ENCODE measurements at regions of chr1 and their contacts with region 1.

Region 1: DNA sequence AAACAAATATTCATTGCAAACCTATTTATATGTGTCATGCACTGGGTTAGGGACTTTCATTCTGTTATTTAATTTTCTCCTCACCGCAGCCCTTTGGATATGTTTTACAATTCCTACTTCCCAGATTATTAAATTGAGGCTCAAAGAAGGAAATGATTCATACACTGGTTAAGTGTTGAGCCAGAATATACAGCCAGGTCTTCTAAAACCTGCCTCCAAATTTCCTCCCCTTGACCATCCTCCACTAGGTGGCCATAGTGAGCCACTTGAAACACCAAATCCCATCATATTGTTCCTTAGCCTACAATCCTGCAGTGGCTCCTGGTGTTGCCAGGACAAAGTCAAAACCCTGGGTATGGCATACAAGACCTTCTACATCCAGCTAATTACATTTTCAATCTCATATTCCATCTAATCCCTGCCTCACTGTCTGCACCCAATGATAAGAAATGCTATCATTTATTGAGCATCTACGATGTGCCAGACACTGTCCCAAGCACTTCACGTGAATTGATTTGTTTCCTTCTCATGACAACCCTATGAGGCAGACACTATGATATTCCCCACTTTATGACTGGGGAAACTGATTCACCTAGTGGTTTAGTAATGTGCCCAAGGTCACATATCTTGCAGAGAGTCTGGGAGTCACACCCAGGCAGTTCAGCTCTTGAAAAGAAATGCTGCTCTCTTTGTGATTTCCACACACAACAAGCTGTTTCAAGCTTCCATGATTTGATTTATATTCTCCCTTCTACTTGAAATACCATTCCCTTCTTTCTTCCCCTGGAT is 23.6 kb upstream of the KIRREL1 start:
- DNase-seq: peak; percentile 88
- ATAC-seq: peak; percentile 75
- H3K4me3 ChIP-seq: no peak overlapping the region
- H3K27ac ChIP-seq: no peak overlapping the region
- H3K4me1 ChIP-seq: peaks cover 15% of the 10 kb centered on the region
- H3K27me3 ChIP-seq: peaks cover 6% of the 10 kb centered on the region
- CTCF ChIP-seq: peak; percentile 93
- POLR2A ChIP-seq: no peak
- RAD21 ChIP-seq: peak; percentile 84

Region 2: GRCh38 chr1:157956732-157957131 is 13.2 kb before region 1 on chr1:
- CTCF ChIA-PET with region 1: interaction called, 10 read pairs
- POLR2A ChIA-PET with region 1: no interaction called
- dilution Hi-C with region 1: no loop called
- in situ Hi-C with region 1: no loop called
- intact Hi-C with region 1: no loop called
- DNase-seq: no peak
- ATAC-seq: no peak
- H3K4me3 ChIP-seq: no peak overlapping the region
- H3K27ac ChIP-seq: no peak overlapping the region
- H3K4me1 ChIP-seq: no peaks in the 10 kb centered on the region
- H3K27me3 ChIP-seq: peaks cover 38% of the 10 kb centered on the region
- CTCF ChIP-seq: no peak
- POLR2A ChIP-seq: no peak
- RAD21 ChIP-seq: no peak

Region 3: DNA sequence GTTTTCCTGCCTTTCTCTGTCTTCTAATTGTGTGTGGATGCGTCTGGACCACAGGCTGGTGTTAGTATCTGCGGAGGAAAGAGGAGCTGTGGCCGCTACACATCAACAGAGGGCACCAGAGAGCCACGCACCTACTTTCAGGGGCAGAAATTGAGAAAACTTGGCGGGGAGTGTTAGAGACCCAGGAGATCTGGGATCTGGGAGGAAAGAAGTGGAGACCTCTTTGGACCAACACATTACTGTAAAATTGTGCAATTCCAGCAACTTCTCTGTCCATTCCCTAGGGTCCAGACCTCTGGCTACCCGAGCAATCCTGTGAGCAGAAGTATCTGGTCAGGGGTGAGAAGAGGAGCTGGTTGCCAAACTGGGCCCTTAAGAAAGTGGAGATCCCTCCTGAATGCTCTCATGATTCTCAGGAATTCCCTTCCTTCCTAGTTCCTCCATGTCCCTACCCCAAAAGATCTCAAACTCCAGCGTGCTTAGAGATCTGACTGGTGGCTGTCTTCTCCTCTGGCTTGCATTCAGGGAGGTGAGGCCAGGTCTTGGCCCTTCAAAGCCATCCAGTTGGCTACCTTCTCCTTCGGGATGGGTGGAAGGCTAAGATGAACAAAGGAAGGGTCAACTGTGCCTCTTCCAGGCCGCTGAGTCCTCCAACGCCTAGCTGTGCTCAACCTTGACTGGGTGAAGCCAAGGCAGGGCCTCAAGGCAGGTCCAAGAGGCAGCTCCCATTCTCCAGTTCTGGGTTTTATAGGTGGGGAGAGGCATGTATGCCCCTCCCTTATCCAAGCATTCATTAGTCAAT is 22.3 kb after region 1 on chr1:
- CTCF ChIA-PET with region 1: interaction called, 12 read pairs
- POLR2A ChIA-PET with region 1: no interaction called
- dilution Hi-C with region 1: no loop called
- in situ Hi-C with region 1: no loop called
- intact Hi-C with region 1: loop called (anchors 2 kb)
- DNase-seq: peak; percentile 63
- ATAC-seq: peak; percentile 33
- H3K4me3 ChIP-seq: no peak overlapping the region
- H3K27ac ChIP-seq: peak overlapping the region; percentile 0; the same call in 1 of the 2 replicates
- H3K4me1 ChIP-seq: peaks cover 10% of the 10 kb centered on the region
- H3K27me3 ChIP-seq: peaks cover 21% of the 10 kb centered on the region
- CTCF ChIP-seq: peak; percentile 99
- POLR2A ChIP-seq: 0 out of 2 replicates have a peak, but pooled peaks have one; percentile 23
- RAD21 ChIP-seq: peak; percentile 98

Region 4: GRCh38 chr1:158035976-158036583 is 66.2 kb after region 1 on chr1:
- CTCF ChIA-PET with region 1: no interaction called
- POLR2A ChIA-PET with region 1: no interaction called
- dilution Hi-C with region 1: no loop called
- in situ Hi-C with region 1: no loop called
- intact Hi-C with region 1: loop called (anchors 2 kb)
- DNase-seq: peak; percentile 68
- ATAC-seq: peak; percentile 40; the same call in 1 of the 2 replicates
- H3K4me3 ChIP-seq: no peak overlapping the region
- H3K27ac ChIP-seq: no peak overlapping the region
- H3K4me1 ChIP-seq: peaks cover 22% of the 10 kb centered on the region
- H3K27me3 ChIP-seq: no peaks in the 10 kb centered on the region
- CTCF ChIP-seq: peak; percentile 80
- POLR2A ChIP-seq: no peak
- RAD21 ChIP-seq: peak; percentile 77

Region 5: GRCh38 chr1:158087320-158087927 is 117.5 kb after region 1 on chr1:
- CTCF ChIA-PET with region 1: interaction called, 6 read pairs
- POLR2A ChIA-PET with region 1: no interaction called
- dilution Hi-C with region 1: no loop called
- in situ Hi-C with region 1: no loop called
- intact Hi-C with region 1: loop called (anchors 1 kb)
- DNase-seq: peak; percentile 77
- ATAC-seq: peak; percentile 95
- H3K4me3 ChIP-seq: no peak overlapping the region
- H3K27ac ChIP-seq: no peak overlapping the region
- H3K4me1 ChIP-seq: no peaks in the 10 kb centered on the region
- H3K27me3 ChIP-seq: no peaks in the 10 kb centered on the region
- CTCF ChIP-seq: peak; percentile 99
- POLR2A ChIP-seq: peak; percentile 43; the same call in 1 of the 2 replicates
- RAD21 ChIP-seq: peak; percentile 97

Region 6: GRCh38 chr1:158117854-158118704 is 148.2 kb after region 1 on chr1:
- CTCF ChIA-PET with region 1: interaction called, 47 read pairs
- POLR2A ChIA-PET with region 1: no interaction called
- dilution Hi-C with region 1: no loop called
- in situ Hi-C with region 1: no loop called
- intact Hi-C with region 1: loop called (anchors 2 kb)
- DNase-seq: peak; percentile 34
- ATAC-seq: peak; percentile 78
- H3K4me3 ChIP-seq: peak overlapping the region; percentile 7
- H3K27ac ChIP-seq: no peak overlapping the region
- H3K4me1 ChIP-seq: no peaks in the 10 kb centered on the region; the same call in 1 of the 2 replicates
- H3K27me3 ChIP-seq: peaks cover 37% of the 10 kb centered on the region
- CTCF ChIP-seq: peak; percentile 59
- POLR2A ChIP-seq: no peak
- RAD21 ChIP-seq: peak; percentile 34

Region 7: DNA sequence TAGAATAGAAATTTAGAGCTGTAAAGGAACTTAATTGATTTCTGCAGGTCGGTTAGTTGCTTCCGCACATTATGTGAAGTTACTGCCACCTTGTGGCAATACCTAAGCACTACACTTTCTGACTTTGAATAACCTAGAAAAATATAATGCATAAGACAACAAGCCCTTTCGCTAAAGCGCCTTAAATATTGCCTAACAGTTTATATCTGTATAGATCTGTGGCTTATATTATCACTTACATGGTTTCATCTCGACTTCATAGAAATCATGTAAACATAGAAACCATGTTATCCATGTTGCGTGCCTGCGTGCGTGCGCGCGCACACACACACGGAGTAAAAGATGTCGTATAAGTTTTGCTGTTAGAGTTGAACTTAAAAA is 1028.9 kb after region 1 on chr1:
- CTCF ChIA-PET with region 1: interaction called, 3 read pairs
- POLR2A ChIA-PET with region 1: no interaction called
- dilution Hi-C with region 1: no loop called
- in situ Hi-C with region 1: loop called (anchors 10 kb)
- intact Hi-C with region 1: loop called (anchors 2 kb)
- DNase-seq: peak; percentile 61
- ATAC-seq: peak; percentile 59
- H3K4me3 ChIP-seq: peak overlapping the region; percentile 61
- H3K27ac ChIP-seq: peak overlapping the region; percentile 36; the same call in 1 of the 2 replicates
- H3K4me1 ChIP-seq: no peaks in the 10 kb centered on the region
- H3K27me3 ChIP-seq: no peaks in the 10 kb centered on the region
- CTCF ChIP-seq: peak; percentile 90
- POLR2A ChIP-seq: no peak
- RAD21 ChIP-seq: peak; percentile 78